ENCODE measurements at regions of chr11 and their contacts with region 1.

Region 1: GRCh38 chr11:68643585-68643984 is 40.8 kb upstream of the GAL start:
- DNase-seq: no peak
- H3K4me3 ChIP-seq: no peak overlapping the region
- H3K27ac ChIP-seq: no peak overlapping the region
- H3K4me1 ChIP-seq: no peaks in the 10 kb centered on the region
- H3K27me3 ChIP-seq: no peaks in the 10 kb centered on the region
- CTCF ChIP-seq: no peak

Region 2: GRCh38 chr11:68513930-68514487 is 129.6 kb before region 1 on chr11:
- CTCF ChIA-PET with region 1: no interaction called
- dilution Hi-C with region 1: no loop called
- in situ Hi-C with region 1: no loop called
- intact Hi-C with region 1: loop called (anchors 2 kb)
- DNase-seq: no peak
- H3K4me3 ChIP-seq: no peak overlapping the region
- H3K27ac ChIP-seq: no peak overlapping the region
- H3K4me1 ChIP-seq: no peaks in the 10 kb centered on the region
- H3K27me3 ChIP-seq: no peaks in the 10 kb centered on the region
- CTCF ChIP-seq: no peak

Region 3: DNA sequence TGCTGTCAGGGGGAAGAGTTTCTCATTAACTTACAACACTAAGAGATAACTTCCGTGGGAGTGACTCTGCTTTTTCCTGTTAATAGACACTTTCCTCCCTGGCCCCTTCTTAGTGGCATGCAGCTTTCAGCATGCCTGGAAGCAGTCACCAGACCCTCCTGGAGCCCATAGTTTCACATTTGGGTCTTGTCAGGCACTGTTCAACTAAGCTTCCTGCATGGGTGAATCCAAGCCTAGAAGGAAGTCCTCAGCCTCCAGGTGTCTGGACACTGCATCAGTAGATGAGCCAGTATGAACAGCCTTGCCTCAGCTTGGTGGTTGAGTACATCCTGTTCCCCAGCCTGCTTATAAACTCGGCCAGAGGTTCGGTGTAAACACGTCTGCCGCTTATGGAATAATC is 115.0 kb before region 1 on chr11:
- CTCF ChIA-PET with region 1: no interaction called
- dilution Hi-C with region 1: no loop called
- in situ Hi-C with region 1: no loop called
- intact Hi-C with region 1: no loop called
- DNase-seq: no peak
- H3K4me3 ChIP-seq: no peak overlapping the region
- H3K27ac ChIP-seq: no peak overlapping the region
- H3K4me1 ChIP-seq: peaks cover 5% of the 10 kb centered on the region
- H3K27me3 ChIP-seq: no peaks in the 10 kb centered on the region
- CTCF ChIP-seq: no peak